ENCODE measurements at regions of chr14 and their contacts with region 1.

Region 1: DNA sequence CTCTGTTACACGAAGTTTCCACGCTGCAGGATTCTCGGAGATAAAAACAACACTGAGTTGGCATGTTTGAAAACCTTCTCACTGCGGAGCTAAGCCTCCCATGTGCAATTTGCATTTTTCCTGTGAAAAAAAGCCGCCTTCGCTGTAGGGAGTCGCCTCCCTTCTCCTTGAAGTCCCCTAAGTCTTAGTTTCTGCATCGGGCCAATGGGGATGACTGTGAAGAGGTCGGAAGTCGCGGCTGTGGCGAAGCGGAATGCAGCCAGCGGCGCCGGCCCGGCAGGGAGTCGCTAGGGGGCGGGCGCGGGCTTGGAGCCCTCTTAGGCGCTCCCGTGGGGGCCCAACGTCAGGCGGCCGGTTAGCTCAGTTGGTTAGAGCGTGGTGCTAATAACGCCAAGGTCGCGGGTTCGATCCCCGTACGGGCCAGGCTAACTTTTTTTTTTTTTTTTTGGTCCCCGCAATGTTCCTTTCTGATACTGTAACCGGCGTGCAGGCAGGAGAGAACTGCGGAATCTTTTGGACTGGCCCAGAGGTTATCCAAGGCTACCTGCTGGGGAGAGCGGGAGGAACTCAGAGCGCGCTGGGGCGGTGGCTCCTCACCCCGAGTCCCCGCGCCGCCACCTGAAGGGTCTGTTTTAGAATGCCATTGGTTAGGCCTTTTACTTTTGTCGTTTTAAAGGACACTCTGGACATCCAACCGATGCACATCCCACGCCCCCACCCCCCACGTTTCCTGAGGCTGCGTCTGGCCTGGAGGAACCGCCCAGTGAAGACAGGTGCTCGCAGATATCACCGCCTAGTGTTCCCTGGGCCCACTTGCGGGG is 2.6 kb upstream of the ZNF839 start:
- DNase-seq: peak; percentile 92 to 97 (median 94)
- ATAC-seq: peak; percentile 70 to 83 (median 80)
- H3K4me3 ChIP-seq: peak overlapping the region; percentile 27 to 74 (median 56)
- H3K27ac ChIP-seq: peak overlapping the region; percentile 49 to 97 (median 94)
- H3K4me1 ChIP-seq: peaks cover 0 to 56% (median 31%) of the 10 kb centered on the region in 12 donors
- H3K27me3 ChIP-seq: no peaks in the 10 kb centered on the region
- CTCF ChIP-seq: peak; percentile 60 to 95 (median 82)
- POLR2A ChIP-seq: peak in 1 of 2 donors; percentile 30

Region 2: GRCh38 chr14:101964297-101965144 is 352.4 kb before region 1 on chr14 and contains the start of gene DYNC1H1:
- intact Hi-C with region 1: loop called in 5 of 10 experiments (anchors 5 to 10 kb)
- DNase-seq: peak; percentile 93 to 97 (median 97)
- ATAC-seq: peak; percentile 85 to 93 (median 91)
- H3K4me3 ChIP-seq: peak within 1 kb of the TSS; percentile 76 to 100 (median 99)
- H3K27ac ChIP-seq: peak within 1 kb of the TSS; percentile 82 to 98 (median 96)
- H3K4me1 ChIP-seq: peaks cover 0 to 59% (median 40%) of the 10 kb centered on the region in 12 donors
- H3K27me3 ChIP-seq: no peaks in the 10 kb centered on the region
- CTCF ChIP-seq: no peak
- POLR2A ChIP-seq: peak; percentile 99 to 100
- total RNA-seq, gene DYNC1H1: 291 to 942 (median 603) TPM

Region 3: DNA sequence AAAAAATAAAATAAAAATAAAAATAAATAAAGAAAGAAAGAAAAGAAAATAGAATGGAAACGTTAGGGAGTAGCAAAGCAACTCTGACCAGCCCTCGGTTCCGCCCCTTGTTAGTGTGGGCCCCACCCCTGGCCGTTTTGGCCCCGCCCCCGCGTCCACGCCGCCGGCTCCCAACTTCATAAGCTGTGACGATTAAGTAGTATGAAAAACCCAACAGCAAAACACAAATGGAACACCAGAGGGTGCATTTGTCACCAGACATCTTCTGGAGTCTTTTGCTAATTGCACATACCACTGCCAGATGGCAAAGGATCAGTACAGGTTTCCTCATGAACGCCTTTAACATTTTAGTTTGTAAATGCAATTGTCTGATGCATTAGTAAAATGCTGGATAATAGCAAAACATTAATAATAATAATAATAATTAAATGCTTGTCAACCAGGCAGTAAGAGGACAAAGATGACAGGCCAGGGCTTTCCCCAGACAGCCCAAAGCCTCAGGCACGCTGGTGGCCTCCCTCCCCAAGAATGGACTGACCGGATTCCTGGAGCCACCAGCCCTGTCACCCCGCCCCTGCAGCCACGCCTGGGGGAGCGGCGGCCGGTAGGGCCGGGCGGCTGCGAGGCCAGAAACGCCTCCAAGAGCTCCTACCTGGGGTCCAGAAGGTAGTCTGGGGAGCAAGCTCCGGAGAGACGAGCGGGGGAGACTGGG is 253.7 kb before region 1 on chr14:
- intact Hi-C with region 1: loop called in 2 of 10 experiments (anchors 5 to 10 kb)
- DNase-seq: peak; percentile 83 to 92 (median 86)
- ATAC-seq: peak; percentile 57 to 98 (median 96)
- H3K4me3 ChIP-seq: peak overlapping the region in 1 of 12 donors; percentile 7
- H3K27ac ChIP-seq: no peak overlapping the region
- H3K4me1 ChIP-seq: peaks cover 0 to 11% (median 5%) of the 10 kb centered on the region in 12 donors
- H3K27me3 ChIP-seq: no peaks in the 10 kb centered on the region
- CTCF ChIP-seq: peak; percentile 29 to 64 (median 54)
- POLR2A ChIP-seq: no peak

Region 4: DNA sequence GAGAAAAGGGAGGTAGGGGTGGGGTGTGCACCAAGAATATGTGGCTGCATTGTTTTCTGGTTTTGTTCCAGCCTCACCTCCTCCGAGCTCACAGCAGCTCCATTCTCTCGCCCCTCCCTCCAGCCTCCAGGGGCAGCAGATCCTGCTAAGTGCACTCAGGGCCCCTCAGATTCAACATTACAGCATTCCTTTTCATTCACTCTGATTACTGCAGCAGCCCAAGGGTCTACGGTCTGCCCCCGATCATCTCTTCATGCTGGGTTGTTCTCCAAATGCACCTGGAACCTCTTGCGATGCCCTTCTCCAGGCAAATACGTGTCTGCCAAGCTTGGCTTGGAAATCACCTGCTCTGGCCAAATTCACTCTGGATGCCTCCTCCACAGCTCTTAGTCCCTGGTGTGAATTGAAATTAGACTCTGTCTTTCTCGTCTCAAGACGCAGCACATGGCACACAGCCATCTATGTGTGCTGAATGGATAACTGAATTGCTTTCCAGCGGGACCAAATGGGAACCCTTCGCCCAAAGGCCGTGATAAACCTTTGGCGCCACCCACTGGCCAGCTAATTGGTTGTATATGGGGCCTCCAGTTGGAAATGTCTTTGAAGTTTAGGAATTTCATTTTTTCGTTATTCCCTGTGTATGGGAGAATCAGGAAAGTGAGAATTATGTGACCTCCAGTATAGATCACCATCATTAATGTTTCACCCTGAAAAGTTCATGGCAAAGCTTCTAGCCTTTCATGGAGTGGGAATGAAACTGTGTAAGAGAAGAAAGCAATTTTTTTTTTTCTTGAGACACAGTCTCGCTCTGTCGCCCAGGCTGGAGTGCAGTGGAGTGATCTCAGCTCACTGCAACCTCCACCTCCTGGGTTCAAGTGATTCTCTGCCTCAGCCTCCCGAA is 220.5 kb before region 1 on chr14:
- intact Hi-C with region 1: loop called in 1 of 10 experiments (anchors 10 kb)
- DNase-seq: peak; percentile 83 to 91 (median 87)
- ATAC-seq: peak; percentile 81 to 91 (median 86)
- H3K4me3 ChIP-seq: no peak overlapping the region
- H3K27ac ChIP-seq: no peak overlapping the region
- H3K4me1 ChIP-seq: peaks cover 0 to 9% (median 0%) of the 10 kb centered on the region in 12 donors
- H3K27me3 ChIP-seq: no peaks in the 10 kb centered on the region
- CTCF ChIP-seq: peak; percentile 69 to 91 (median 83)
- POLR2A ChIP-seq: no peak

Region 5: DNA sequence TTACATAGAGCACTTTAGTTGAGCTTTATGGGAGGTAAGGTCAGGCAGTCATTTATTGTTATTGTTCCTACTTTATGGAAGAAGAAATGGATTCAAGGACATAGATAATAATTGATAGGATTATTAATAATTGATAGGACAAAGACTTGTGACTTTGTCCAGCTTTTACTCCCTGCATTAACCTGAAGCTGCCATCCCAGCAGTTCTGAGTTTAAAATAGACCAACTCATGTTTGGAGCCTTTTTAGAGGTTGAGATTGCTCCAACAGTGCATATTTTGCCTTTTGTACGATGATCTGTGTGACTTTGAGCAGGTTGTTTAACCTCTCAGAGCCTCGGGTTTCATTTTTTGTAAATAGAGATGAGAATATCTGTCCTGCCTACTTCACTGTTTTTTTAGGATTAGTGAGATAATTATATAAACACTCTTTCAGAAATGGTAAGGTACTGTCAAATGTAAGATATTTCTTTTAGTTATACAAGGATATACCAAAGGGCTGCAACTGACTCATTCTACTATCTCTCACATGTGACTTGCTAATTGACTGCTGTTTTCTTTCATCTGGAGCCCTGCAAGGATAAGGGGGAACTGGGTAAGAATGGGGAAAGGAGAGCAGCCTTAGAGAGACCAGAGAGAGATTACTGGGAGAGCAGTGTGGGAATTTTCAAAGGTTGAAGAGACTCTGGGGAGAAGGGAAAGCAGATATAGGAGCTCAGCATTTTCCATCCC is 162.0 kb before region 1 on chr14:
- intact Hi-C with region 1: loop called in 1 of 10 experiments (anchors 5 kb)
- DNase-seq: no peak
- ATAC-seq: peak in 2 of 4 donors; percentile 33 to 38
- H3K4me3 ChIP-seq: no peak overlapping the region
- H3K27ac ChIP-seq: peak overlapping the region in 1 of 12 donors; percentile 7
- H3K4me1 ChIP-seq: peaks cover 0 to 66% (median 22%) of the 10 kb centered on the region in 12 donors
- H3K27me3 ChIP-seq: no peaks in the 10 kb centered on the region
- CTCF ChIP-seq: no peak
- POLR2A ChIP-seq: no peak

Region 6: DNA sequence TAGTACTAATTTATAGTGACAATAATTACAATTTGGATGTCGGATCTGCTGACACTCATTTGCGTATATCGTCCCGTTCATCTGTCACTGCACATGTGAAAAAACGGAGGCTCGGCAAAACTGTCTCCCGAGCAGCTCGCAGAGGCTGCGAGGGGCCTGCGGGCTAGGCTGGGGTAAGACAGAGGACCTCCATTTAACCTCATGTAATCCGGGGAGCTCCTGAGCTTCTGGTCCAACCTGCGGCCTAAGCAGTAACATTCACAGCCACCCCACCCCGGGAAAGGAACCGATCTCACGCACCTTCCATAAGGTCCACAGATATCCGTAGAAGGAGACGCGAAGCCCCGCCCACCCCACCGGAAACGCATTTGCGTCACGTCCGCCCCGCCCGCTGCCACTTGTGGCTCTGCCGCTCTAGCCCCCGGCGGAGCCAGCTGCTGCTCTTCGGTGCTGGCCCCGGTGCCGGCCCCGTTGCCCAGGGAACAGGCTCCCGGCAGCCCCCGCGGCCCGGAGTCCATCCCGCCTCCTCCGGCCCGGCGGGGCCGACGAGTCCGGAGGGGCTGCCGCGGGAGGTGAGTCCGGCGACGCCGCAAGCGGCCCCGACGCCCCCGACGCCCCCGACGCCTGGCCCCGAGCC is 45.7 kb after region 1 on chr14 and contains the starts of genes CINP and TECPR2:
- intact Hi-C with region 1: loop called in 2 of 10 experiments (anchors 5 kb)
- DNase-seq: peak; percentile 97 to 99 (median 98)
- ATAC-seq: peak; percentile 98 to 99 (median 99)
- H3K4me3 ChIP-seq: peak within 1 kb of the TSS; percentile 81 to 96 (median 92)
- H3K27ac ChIP-seq: peak within 1 kb of the TSS; percentile 86 to 99 (median 94)
- H3K4me1 ChIP-seq: peaks cover 5 to 46% (median 28%) of the 10 kb centered on the region in 12 donors
- H3K27me3 ChIP-seq: no peaks in the 10 kb centered on the region
- CTCF ChIP-seq: no peak
- POLR2A ChIP-seq: peak; percentile 38 to 89
- total RNA-seq, gene CINP: 26.4 to 40.0 (median 33.8) TPM
- total RNA-seq, gene TECPR2: 16.8 to 30.6 (median 27.8) TPM

Region 7: DNA sequence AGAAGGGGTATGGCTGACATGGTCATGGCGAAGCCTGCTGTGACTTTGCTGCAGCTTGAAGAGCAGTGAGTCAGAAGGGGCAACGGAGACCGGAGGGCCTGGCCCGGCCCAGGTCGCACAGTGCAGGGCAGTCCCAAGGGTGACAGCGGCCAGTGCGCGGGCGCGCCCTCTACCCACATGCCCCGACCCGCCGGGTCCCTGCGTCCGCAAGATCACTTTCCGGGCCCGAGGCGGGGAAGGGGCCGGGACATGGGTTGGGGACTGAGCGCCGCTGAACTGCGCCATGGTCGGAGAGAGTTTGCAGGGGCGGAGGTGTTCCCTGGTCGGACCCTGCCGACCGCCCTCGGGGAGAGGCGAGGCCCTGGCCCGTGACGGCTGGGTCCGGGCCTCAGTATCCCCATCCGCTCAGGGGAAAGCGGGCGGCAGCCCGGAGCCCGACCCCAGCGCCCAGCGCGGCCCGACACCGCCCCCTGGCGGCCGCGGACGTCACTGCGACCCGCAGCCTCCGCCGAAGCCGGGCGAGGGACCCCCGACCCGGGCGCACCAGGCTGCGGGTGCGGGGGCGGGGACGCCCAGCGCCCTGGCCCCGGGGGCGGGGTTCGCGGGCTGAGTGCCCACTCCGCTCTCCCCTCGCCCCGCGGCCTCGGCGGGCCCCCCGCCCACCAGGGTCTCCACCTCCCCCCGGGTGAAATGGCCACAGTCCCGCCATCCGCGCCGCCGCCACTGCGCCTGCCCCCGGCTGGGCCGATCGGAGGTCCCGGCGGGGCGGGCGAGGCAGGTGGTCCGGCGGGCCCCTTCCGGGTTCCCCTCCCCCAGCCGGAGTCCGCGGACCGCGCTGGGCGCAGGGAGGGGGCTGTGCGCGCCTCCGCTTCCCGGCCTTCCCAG is 199.8 kb after region 1 on chr14:
- intact Hi-C with region 1: loop called in 5 of 10 experiments (anchors 2 to 10 kb)
- DNase-seq: peak in 4 of 5 donors; percentile 70 to 85 (median 72)
- ATAC-seq: peak; percentile 41 to 80 (median 78)
- H3K4me3 ChIP-seq: peak overlapping the region; percentile 51 to 89 (median 74)
- H3K27ac ChIP-seq: peak overlapping the region in 8 of 12 donors; percentile 2 to 83 (median 60)
- H3K4me1 ChIP-seq: peaks cover 0 to 14% (median 4%) of the 10 kb centered on the region in 12 donors
- H3K27me3 ChIP-seq: no peaks in the 10 kb centered on the region
- CTCF ChIP-seq: peak; percentile 67 to 100 (median 92)
- POLR2A ChIP-seq: peak in 1 of 2 donors; percentile 17

Region 8: GRCh38 chr14:103594265-103594664 is 1277.3 kb after region 1 on chr14:
- intact Hi-C with region 1: no loop called
- DNase-seq: peak in 4 of 5 donors; percentile 43 to 61 (median 54)
- ATAC-seq: peak; percentile 37 to 75 (median 67)
- H3K4me3 ChIP-seq: peak overlapping the region in 4 of 12 donors; percentile 4 to 14 (median 8)
- H3K27ac ChIP-seq: peak overlapping the region in 11 of 12 donors; percentile 37 to 61 (median 50)
- H3K4me1 ChIP-seq: peaks cover 0 to 37% (median 22%) of the 10 kb centered on the region in 12 donors
- H3K27me3 ChIP-seq: no peaks in the 10 kb centered on the region
- CTCF ChIP-seq: no peak
- POLR2A ChIP-seq: no peak

Measured in heart left ventricle (tissue), 16 donors.